ENCODE measurements at regions of chr1 and their contacts with region 1.

Region 1: DNA sequence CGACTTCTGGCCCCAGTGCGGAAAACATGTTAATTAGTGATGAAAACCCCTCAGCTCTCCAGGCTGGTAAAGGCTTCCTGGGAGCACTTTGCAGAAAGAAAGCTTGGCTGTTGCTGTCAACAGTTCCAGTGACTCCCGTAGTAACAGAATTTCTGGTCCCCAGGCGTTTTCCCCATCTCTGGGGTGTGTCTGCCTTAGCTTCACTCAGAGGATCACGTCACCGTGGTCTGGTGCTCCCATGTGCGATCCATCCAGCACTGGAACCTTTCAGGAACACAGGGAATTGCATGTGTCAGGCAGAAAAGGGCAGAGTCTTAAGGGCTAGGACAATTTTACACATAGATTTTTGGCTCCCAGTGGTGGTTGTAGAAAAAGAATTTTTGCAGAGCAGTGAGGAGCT is 470.4 kb upstream of the USP24 start:
- DNase-seq: no peak
- ATAC-seq: no peak
- H3K4me3 ChIP-seq: no peak overlapping the region
- H3K27ac ChIP-seq: 0 out of 2 replicates have a peak overlapping the region, but pooled peaks have one; percentile 88
- H3K4me1 ChIP-seq: peaks cover 23% of the 10 kb centered on the region
- H3K27me3 ChIP-seq: no peaks in the 10 kb centered on the region
- CTCF ChIP-seq: no peak

Region 2: DNA sequence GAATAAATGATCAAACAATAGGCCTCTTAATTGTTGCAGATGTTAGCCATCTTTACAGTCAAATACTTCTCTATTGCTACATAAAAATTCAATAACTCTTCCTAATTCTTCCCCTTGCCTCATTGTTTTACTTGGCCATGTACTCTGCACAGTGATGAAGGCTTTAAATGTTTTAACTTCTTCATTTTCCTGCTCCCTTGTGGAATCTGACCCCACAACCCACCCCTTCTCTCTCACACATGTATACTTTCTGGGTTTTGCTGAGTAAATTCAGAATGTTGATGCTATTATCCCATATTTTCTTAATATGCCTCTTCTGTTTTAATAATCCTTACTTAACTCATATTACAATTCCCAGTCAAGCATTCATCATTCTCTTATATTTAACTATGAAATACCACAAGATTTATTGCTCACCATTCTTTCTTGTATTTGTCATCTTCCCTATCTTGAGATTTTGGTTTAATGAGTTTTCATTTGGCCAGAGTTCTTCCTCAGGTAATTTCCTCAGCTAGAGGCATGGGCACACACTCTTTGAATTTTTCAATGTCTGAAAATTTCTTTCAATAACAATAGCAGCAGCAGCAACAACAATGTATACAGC is 142.6 kb before region 1 on chr1:
- CTCF ChIA-PET with region 1: no interaction called
- POLR2A ChIA-PET with region 1: no interaction called
- intact Hi-C with region 1: loop called (anchors 1 kb)
- DNase-seq: peak; percentile 83
- ATAC-seq: peak; percentile 80
- H3K4me3 ChIP-seq: peak overlapping the region; percentile 5; the same call in 1 of the 2 replicates
- H3K27ac ChIP-seq: peak overlapping the region; percentile 77
- H3K4me1 ChIP-seq: peaks cover 33% of the 10 kb centered on the region
- H3K27me3 ChIP-seq: no peaks in the 10 kb centered on the region
- CTCF ChIP-seq: no peak

Region 3: GRCh38 chr1:55724551-55725325 is 39.2 kb after region 1 on chr1:
- CTCF ChIA-PET with region 1: no interaction called
- POLR2A ChIA-PET with region 1: no interaction called
- intact Hi-C with region 1: loop called (anchors 2 kb)
- DNase-seq: peak; percentile 51
- ATAC-seq: no peak
- H3K4me3 ChIP-seq: peak overlapping the region; percentile 5; the same call in 1 of the 2 replicates
- H3K27ac ChIP-seq: peak overlapping the region; percentile 89
- H3K4me1 ChIP-seq: peaks cover 42% of the 10 kb centered on the region
- H3K27me3 ChIP-seq: no peaks in the 10 kb centered on the region
- CTCF ChIP-seq: no peak

Region 4: DNA sequence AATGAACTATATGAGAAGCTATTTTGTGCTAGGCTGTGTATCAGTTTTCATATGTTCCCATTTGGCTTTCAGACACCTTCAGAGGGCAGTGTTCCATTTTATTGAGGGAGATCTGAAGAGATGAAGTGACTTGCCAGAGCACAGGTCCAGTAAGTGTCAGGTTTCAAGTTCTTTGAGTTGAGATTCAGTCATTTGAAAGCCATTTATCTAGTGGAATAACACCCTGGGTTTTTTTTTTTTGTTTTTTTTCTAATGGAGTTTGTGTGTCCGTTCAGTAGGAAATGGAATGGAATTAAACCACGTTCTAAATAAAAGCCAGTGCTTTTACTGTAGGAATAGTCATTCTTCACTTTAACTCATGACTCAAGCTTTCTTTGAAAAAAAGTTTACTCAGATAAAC is 182.5 kb after region 1 on chr1:
- CTCF ChIA-PET with region 1: no interaction called
- POLR2A ChIA-PET with region 1: no interaction called
- intact Hi-C with region 1: loop called (anchors 1 kb)
- DNase-seq: peak; percentile 48
- ATAC-seq: peak; percentile 45
- H3K4me3 ChIP-seq: no peak overlapping the region
- H3K27ac ChIP-seq: peak overlapping the region; percentile 25
- H3K4me1 ChIP-seq: peaks cover 23% of the 10 kb centered on the region
- H3K27me3 ChIP-seq: no peaks in the 10 kb centered on the region
- CTCF ChIP-seq: peak; percentile 40; the same call in 1 of the 2 replicates